Brain microvascular endothelial cell (primary cell): ENCODE measurements at regions of chr7 and their contacts with region 1.

Region 1: DNA sequence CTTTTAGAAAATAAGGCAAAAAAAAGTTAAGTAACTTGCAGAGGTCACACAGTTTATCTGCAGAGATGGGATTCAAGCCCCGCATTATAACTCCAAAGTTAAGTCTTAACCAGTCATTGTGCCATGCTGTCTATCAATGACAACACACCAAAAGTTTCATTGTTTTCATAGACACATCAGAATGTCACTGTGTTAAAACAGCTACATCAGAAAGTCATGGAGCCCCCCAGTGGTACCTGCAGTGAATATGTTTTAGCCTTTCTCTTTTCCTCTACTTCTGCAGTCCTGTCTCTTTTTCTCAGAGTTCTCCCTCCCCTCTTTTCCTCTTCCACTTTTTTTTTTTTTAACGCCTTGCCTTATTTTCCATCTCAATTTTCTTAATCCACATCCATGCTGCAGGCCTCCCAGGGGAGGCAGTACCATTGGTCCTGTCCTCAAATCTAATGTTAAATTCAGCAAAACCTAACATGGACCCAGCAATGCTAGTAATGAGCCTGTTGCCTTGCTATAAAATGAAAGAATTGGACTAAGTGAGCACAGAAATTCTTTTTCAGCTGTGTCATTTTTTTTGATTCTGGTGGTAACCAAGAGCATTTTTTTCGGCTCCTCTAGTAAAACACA is 3.8 kb upstream of the NRCAM start:
- DNase-seq: peak; percentile 47
- H3K4me3 ChIP-seq: no peak overlapping the region
- H3K27ac ChIP-seq: no peak overlapping the region
- H3K27me3 ChIP-seq: peaks cover 17% of the 10 kb centered on the region
- CTCF ChIP-seq: peak; percentile 71

Region 2: DNA sequence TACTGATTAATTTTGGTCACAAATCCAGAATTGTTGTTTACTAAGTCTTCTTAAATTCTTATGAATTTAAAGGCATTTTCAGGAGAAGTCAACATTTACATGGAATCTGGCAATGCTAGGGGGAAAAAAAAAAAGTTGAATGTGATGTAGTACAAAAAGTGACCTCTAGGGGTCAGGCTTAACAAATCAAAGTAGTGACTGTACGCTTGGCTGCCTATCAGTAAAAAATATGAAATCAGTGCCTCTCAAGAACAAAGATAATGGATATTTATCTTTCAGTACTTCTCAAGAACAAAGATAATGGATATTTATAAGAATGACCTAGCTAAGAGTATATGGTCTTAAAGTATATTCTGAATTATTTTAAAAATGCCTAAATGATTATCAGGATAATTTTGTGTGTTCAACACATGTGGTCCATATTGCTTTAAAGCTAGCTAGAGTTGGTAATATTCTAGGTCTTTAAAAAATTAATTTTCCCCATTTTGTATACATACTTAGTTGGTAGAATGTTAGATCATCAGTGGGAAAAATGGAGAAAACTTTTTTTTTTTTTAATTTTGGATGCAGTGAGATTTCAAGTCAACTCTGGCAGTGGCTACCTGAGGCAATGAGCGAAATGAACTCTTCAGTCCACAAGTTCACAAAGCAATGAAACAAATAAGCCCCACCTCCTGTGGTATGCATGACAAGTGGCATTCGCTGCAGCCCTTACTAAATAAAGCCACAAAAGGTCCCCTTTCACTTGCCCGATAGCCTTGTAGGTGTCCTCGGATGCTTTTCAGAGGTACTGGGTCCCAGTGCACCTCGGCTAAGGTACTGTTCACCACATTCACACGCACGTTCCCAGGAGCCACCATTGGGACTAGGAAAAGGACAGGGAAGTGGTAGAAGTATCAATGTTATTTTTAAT is 278.7 kb before region 1 on chr7:
- in situ Hi-C with region 1: loop called (anchors 25 kb)
- DNase-seq: peak; percentile 14
- H3K4me3 ChIP-seq: no peak overlapping the region
- H3K27ac ChIP-seq: no peak overlapping the region
- H3K27me3 ChIP-seq: no peaks in the 10 kb centered on the region
- CTCF ChIP-seq: peak; percentile 50

Region 3: DNA sequence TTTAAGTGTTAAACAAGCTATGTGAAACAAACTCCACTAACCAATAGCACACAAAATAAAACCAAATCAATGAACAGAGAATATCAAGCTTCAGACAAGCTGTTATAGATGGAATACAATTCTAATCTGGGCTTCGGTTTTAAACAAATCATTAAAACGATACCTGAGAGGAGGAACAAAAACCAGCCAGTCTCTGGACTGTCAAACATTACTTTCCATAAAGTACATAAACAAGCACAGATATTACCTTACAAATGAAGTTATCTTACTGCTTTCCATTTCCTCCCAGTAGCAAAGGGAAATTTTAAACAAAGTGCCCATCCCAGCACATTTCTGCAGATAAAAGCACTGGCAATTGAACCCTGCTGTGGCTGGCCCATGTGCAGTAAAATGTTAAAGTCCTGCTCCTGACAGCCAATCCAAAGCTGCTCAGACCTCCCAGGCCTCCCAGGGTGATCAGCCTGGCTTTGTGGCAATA is 131.8 kb before region 1 on chr7:
- in situ Hi-C with region 1: no loop called
- DNase-seq: no peak
- H3K4me3 ChIP-seq: no peak overlapping the region
- H3K27ac ChIP-seq: no peak overlapping the region
- H3K27me3 ChIP-seq: no peaks in the 10 kb centered on the region
- CTCF ChIP-seq: no peak